G401 (cell line): ENCODE measurements at regions of chr16 and their contacts with region 1.

Region 1: GRCh38 chr16:8567750-8568617 is 22.3 kb downstream of the TMEM114 start:
- DNase-seq: peak; percentile 76

Region 2: DNA sequence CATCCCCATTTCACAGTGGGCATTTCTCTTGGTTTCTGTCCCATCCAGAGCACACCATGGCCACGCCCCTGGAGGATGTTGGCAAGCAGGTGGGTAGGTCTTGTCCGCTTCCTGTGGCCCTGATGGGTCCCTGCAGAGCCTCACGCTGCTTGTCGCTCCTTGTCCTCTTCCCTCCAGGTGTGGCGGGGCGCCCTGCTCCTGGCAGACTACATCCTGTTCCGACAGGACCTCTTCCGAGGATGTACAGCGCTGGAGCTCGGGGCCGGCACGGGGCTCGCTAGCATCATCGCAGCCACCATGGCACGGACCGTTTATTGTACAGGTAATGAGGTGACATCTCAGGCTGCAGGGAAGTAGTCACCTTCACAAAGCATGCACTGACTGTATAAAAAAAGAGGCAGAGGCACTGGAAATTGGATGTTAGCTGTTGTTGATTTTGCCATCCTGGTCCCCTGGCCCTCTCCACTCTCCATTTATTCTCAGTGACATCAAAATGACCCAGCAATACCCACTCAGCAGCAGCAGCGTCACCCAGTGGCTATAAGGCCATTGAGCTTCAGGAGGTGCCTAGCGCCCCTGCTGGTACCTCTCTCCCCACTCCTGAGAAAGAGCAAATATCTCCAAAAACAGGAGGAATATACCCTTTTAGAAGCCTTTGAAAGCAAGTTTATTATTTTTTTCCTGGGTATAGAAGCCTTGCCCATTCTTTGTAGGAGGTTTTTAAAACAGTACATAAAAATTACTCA is 67.2 kb after region 1 on chr16:
- in situ Hi-C with region 1: loop called (anchors 5 kb)
- DNase-seq: no peak